ENCODE measurements at regions of chrX and their contacts with region 1.

Region 1: GRCh38 chrX:130024127-130024526 is 41.7 kb downstream of the BCORL1 start:
- DNase-seq: peak; percentile 92
- H3K4me3 Mint-ChIP-seq: peak overlapping the region; percentile 37
- H3K27ac Mint-ChIP-seq: peak overlapping the region; percentile 79
- H3K4me1 Mint-ChIP-seq: peaks cover 19% of the 10 kb centered on the region
- H3K27me3 Mint-ChIP-seq: no peaks in the 10 kb centered on the region

Region 2: DNA sequence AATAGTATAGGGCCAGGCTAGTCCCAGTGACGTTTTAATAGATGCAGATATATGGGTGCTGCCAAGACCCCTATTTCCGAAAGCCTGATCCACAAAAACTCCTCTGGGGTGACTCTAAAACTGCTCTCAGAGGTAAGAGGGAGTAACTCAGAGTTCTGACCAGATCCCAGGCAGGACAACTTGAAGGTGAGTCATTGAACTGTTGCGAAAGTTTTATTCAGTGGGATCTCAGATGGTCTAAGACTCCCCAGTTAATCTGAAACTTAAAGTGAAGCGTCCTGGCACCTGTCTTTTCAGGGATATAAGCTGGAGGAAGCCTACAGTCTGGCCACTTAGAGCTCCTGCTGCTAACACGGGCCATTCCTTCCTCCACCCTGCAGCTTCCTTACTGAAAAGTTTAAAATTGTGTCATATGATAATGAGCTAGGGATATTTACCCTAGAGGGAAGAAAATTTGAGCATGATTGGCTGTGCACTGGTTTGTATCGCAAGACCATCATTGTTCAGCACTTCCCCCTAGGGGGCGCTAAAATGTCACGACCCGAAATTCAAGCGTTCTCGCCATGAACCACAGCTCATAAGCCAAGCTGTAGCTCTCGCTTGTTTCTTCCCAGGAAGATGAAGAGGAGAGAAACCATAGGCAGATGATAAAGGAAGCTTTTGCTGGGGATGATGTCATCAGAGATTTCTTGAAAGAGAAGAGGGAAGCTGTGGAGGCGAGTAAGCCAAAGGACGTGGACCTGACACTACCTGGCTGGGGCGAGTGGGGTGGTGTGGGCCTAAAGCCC is 98.6 kb before region 1 on chrX:
- CTCF ChIA-PET with region 1: interaction called, 85 read pairs
- DNase-seq: peak; percentile 78
- H3K4me3 Mint-ChIP-seq: no peak overlapping the region
- H3K27ac Mint-ChIP-seq: peak overlapping the region; percentile 25
- H3K4me1 Mint-ChIP-seq: peaks cover 5% of the 10 kb centered on the region
- H3K27me3 Mint-ChIP-seq: no peaks in the 10 kb centered on the region

Region 3: GRCh38 chrX:129931411-129932015 is 92.6 kb before region 1 on chrX:
- CTCF ChIA-PET with region 1: interaction called, 85 read pairs
- DNase-seq: peak; percentile 80
- H3K4me3 Mint-ChIP-seq: peak overlapping the region; percentile 72
- H3K27ac Mint-ChIP-seq: peak overlapping the region; percentile 87
- H3K4me1 Mint-ChIP-seq: peaks cover 5% of the 10 kb centered on the region
- H3K27me3 Mint-ChIP-seq: peaks cover 29% of the 10 kb centered on the region

Region 4: GRCh38 chrX:130039847-130040246 is 15.7 kb after region 1 on chrX:
- CTCF ChIA-PET with region 1: interaction called, 14 read pairs
- DNase-seq: no peak
- H3K4me3 Mint-ChIP-seq: no peak overlapping the region
- H3K27ac Mint-ChIP-seq: no peak overlapping the region
- H3K4me1 Mint-ChIP-seq: no peaks in the 10 kb centered on the region
- H3K27me3 Mint-ChIP-seq: no peaks in the 10 kb centered on the region

Measured in activated naive CD4-positive, alpha-beta T cell treated with anti-CD3 and anti-CD28 coated beads, Interleukin-2, amount 10 ng/mL, durations not matched to agents 7 days and 5 days (primary cell).